ENCODE measurements at regions of chr7 and their contacts with region 1.

Region 1: GRCh38 chr7:17530741-17531417 is 232.4 kb downstream of the AHR start:
- DNase-seq: no peak
- ATAC-seq: peak in 1 of 8 donors; percentile 49
- H3K4me3 ChIP-seq: no peak overlapping the region
- H3K27ac ChIP-seq: no peak overlapping the region
- H3K4me1 ChIP-seq: peaks cover 0 to 29% (median 0%) of the 10 kb centered on the region in 9 donors
- H3K27me3 ChIP-seq: no peaks in the 10 kb centered on the region
- CTCF ChIP-seq: peak in 8 of 9 donors; percentile 12 to 61 (median 43)

Region 2: DNA sequence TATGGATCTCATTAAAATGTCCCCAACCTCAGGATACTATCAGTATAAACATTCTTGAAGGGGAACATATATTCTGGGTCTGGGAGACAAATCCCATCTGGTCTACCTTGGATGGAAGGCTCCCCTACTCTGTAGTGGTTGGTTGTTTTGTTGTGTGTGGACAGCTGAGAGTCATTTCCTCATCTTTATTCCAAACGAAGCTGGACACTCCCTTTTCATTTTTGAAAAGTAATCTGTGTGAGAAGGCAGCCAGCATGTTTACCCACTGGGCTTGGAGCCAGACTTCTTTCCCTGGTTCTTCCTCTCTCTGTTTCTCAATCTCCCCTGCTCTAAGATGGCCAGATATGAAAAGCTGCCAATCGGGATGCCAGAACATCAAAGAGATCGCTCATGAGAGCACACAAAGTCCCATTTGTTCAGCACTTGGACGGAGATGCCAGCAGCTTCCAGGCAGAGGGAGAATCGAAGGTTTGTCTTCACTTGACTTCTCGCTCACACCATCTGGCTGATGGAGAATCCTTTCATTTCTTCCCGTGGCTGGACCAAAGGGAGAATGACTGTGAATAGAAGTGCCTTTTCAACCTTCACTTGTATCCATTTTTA is 541.0 kb before region 1 on chr7:
- intact Hi-C with region 1: loop called in 4 of 10 experiments (anchors 5 to 10 kb)
- DNase-seq: peak; percentile 10 to 55
- ATAC-seq: peak in 7 of 8 donors; percentile 41 to 92 (median 79)
- H3K4me3 ChIP-seq: peak overlapping the region in 6 of 10 donors; percentile 0 to 42 (median 32)
- H3K27ac ChIP-seq: peak overlapping the region in 8 of 10 donors; percentile 1 to 66 (median 42)
- H3K4me1 ChIP-seq: peaks cover 0 to 15% (median 8%) of the 10 kb centered on the region in 9 donors
- H3K27me3 ChIP-seq: no peaks in the 10 kb centered on the region
- CTCF ChIP-seq: no peak

Region 3: DNA sequence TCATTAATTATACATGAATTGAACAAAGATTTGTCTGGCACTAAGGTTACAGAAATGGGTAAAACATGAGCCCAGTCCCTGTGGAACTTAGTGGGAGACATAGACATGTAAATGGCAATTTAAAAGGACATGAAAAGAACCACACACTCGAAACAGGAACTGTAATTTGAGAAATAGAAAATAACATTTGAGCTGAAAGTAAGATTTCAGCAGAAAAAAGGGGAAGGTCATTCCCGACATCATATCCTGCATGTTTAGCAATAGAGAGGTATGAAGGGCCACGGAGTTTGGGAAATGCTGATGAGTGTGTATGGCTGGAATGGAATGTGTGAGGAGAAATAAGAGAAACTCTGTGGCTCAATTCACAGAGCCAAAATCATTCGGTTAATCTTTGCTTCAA is 407.9 kb before region 1 on chr7:
- intact Hi-C with region 1: no loop called
- DNase-seq: no peak
- ATAC-seq: peak in 3 of 8 donors; percentile 33 to 67 (median 49)
- H3K4me3 ChIP-seq: no peak overlapping the region
- H3K27ac ChIP-seq: peak overlapping the region in 1 of 10 donors; percentile 62
- H3K4me1 ChIP-seq: peaks cover 0 to 42% (median 0%) of the 10 kb centered on the region in 9 donors
- H3K27me3 ChIP-seq: no peaks in the 10 kb centered on the region
- CTCF ChIP-seq: no peak

Region 4: DNA sequence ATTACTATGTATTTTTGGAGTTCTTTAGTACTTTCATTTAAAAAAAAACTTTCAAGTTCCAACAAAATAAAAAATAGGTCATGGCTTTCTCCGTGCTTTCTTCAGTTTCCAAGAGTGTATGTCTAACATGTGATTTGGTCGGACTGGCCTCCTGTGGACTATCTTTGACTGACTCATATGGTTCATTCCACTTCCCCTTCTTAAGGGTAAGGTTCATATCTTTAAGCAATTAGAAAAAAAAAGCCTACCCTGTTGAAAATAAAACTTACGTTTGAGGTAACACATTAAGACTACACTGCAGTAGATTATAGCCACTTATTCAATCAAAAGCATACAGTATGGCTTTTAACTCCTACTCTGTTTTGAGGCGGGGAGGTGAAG is 345.2 kb before region 1 on chr7:
- intact Hi-C with region 1: no loop called
- DNase-seq: no peak
- ATAC-seq: peak in 1 of 8 donors; percentile 53
- H3K4me3 ChIP-seq: no peak overlapping the region
- H3K27ac ChIP-seq: peak overlapping the region in 1 of 10 donors; percentile 5
- H3K4me1 ChIP-seq: peaks cover 0 to 16% (median 0%) of the 10 kb centered on the region in 9 donors
- H3K27me3 ChIP-seq: no peaks in the 10 kb centered on the region
- CTCF ChIP-seq: no peak

Measured in heart right ventricle (tissue), 16 donors.